ENCODE measurements at regions of chr9 and their contacts with region 1.

Region 1: DNA sequence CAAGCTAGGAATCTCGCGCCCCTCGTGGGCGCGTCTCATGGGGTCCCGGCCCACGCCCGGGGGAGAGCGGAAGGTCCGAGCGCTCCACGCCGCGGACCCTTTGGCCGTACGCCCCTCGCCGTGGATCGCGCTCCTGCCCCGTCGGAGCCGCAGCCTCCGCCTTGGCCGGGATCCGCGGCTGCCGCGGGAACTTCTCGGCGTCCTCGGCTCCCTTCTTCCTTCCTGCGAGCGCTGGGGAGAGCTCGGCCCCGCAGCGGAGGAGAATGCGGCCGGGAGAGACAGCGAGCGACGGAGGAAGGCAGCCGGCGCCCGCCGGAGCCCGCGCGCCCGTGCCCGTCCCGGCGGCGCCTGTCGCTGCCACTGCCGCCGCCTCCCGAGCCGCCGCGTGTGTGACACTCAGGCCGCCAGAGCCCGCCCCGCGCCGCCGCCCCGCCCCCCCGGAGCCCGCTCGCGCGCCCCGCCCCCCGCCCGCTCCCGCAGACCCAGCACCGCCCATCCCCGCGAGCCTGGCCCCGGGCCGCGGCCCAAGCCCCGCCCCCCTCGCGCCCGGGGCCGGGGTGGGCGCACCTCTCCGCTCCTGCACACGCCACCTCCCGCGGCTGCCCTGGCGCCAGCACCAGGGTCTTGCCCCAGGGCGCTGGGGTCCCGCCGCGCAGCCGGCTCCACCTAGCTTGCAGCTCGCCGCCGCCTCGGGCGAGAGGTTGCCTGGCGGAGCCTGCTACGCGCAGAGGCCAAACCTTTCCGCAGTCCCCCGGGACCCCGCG is at the start of gene SHB:
- DNase-seq: peak; percentile 53
- H3K4me3 Mint-ChIP-seq: peak within 1 kb of the TSS; percentile 87
- H3K27ac Mint-ChIP-seq: no peak within 1 kb of the TSS
- H3K4me1 Mint-ChIP-seq: peaks cover 26% of the 10 kb centered on the region
- H3K27me3 Mint-ChIP-seq: no peaks in the 10 kb centered on the region
- CTCF ChIP-seq: no peak
- total RNA-seq, gene SHB: 22.3 and 29.6 TPM in 2 replicates

Region 2: GRCh38 chr9:37390759-37391158 is 678.3 kb before region 1 on chr9:
- CTCF ChIA-PET with region 1: no interaction called
- POLR2A ChIA-PET with region 1: no interaction called
- intact Hi-C with region 1: no loop called
- DNase-seq: peak; percentile 54
- H3K4me3 Mint-ChIP-seq: no peak overlapping the region
- H3K27ac Mint-ChIP-seq: no peak overlapping the region
- H3K4me1 Mint-ChIP-seq: no peaks in the 10 kb centered on the region
- H3K27me3 Mint-ChIP-seq: peaks cover 11% of the 10 kb centered on the region
- CTCF ChIP-seq: peak; percentile 23

Region 3: GRCh38 chr9:37920471-37921167 is 148.4 kb before region 1 on chr9:
- CTCF ChIA-PET with region 1: interaction called, 59 read pairs
- POLR2A ChIA-PET with region 1: interaction called, 8 read pairs
- intact Hi-C with region 1: loop called (anchors 1 kb)
- DNase-seq: no peak
- H3K4me3 Mint-ChIP-seq: no peak overlapping the region
- H3K27ac Mint-ChIP-seq: peak overlapping the region; percentile 85
- H3K4me1 Mint-ChIP-seq: peaks cover 15% of the 10 kb centered on the region
- H3K27me3 Mint-ChIP-seq: no peaks in the 10 kb centered on the region
- CTCF ChIP-seq: no peak

Region 4: GRCh38 chr9:37994639-37995347 is 74.3 kb before region 1 on chr9:
- CTCF ChIA-PET with region 1: interaction called, 8 read pairs
- POLR2A ChIA-PET with region 1: interaction called, 5 read pairs
- intact Hi-C with region 1: loop called (anchors 2 kb)
- DNase-seq: peak; percentile 72
- H3K4me3 Mint-ChIP-seq: peak overlapping the region; percentile 59
- H3K27ac Mint-ChIP-seq: peak overlapping the region; percentile 55
- H3K4me1 Mint-ChIP-seq: peaks cover 37% of the 10 kb centered on the region
- H3K27me3 Mint-ChIP-seq: no peaks in the 10 kb centered on the region
- CTCF ChIP-seq: no peak

Region 5: DNA sequence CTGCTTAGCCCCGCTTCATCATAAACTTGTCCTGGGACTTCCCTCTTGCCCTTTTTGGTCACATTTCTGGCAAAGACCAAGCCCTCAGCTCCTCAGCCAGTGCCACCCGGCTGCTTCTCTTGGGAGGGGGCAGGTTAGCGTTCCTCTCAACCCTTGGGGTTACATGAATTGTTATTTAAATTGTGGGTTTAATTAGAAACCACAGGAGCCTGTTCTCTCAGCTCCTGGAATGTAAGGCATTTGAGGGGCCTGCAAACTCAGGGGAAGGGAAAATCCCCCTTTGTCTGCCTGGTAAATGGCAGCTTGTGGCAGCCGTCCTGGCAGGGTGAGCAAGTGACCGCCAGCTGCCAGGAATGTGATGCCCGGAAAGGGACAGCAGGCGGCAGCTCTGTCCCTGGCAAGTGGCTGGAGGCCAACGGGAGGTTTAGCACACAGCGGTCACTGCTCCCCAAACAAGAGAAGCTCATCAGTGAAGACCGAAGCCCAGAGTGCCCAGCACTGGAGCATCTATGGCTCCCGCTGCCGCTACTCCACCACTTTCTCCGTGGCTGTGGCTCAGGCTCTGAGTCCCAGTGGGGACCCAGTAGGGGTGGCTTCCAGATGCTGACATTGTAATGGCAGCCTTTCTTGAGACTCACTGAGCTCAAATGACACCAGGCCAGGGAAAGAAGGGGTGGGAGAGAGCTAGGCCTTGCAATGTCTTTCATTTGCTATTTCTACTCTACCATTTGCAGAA is 51.7 kb before region 1 on chr9:
- CTCF ChIA-PET with region 1: interaction called, 4 read pairs
- POLR2A ChIA-PET with region 1: interaction called, 11 read pairs
- intact Hi-C with region 1: loop called (anchors 2 kb)
- DNase-seq: peak; percentile 54
- H3K4me3 Mint-ChIP-seq: no peak overlapping the region
- H3K27ac Mint-ChIP-seq: peak overlapping the region; percentile 90
- H3K4me1 Mint-ChIP-seq: peaks cover 47% of the 10 kb centered on the region
- H3K27me3 Mint-ChIP-seq: no peaks in the 10 kb centered on the region
- CTCF ChIP-seq: no peak

Region 6: GRCh38 chr9:38047301-38048251 is 21.5 kb before region 1 on chr9:
- CTCF ChIA-PET with region 1: interaction called, 9 read pairs
- POLR2A ChIA-PET with region 1: interaction called, 26 read pairs
- intact Hi-C with region 1: no loop called
- DNase-seq: peak; percentile 90
- H3K4me3 Mint-ChIP-seq: peak overlapping the region; percentile 36
- H3K27ac Mint-ChIP-seq: peak overlapping the region; percentile 81
- H3K4me1 Mint-ChIP-seq: peaks cover 42% of the 10 kb centered on the region
- H3K27me3 Mint-ChIP-seq: no peaks in the 10 kb centered on the region
- CTCF ChIP-seq: no peak

Region 7: GRCh38 chr9:38088006-38088925 is 19.2 kb after region 1 on chr9:
- CTCF ChIA-PET with region 1: interaction called, 29 read pairs
- POLR2A ChIA-PET with region 1: interaction called, 3 read pairs
- intact Hi-C with region 1: no loop called
- DNase-seq: peak; percentile 66
- H3K4me3 Mint-ChIP-seq: no peak overlapping the region
- H3K27ac Mint-ChIP-seq: no peak overlapping the region
- H3K4me1 Mint-ChIP-seq: no peaks in the 10 kb centered on the region
- H3K27me3 Mint-ChIP-seq: no peaks in the 10 kb centered on the region
- CTCF ChIP-seq: peak; percentile 97

Region 8: DNA sequence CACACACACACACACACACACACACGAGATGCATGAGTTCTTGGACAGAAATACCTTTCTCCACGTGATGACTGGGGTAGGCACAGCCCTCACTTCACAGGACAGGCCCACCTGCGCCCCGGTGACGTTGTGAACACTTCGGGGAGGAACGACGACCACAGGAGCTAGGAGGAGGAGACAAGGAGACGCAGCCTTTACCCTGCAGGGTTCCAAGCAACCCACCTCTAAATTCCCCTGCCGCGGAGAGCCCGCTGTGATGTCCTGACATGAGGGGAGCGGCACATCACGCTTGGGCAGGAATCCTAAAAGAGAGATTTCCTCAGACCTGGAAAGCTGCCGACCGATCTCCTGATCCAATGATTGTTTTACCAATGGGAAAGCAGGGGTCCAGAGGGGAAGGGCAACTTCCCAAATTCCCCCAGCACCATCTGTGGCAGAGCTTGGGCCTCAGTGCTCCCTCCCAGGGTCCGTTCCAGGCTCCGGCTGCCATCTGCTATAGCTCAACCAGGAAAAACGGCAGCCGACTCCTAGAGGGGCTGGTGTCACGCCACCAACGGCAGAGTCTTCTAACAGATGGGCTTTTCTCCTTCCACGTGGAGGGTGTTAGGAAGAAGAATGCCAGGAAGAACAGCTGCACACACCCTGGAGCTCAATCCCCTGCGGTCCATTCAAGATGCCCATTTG is 345.1 kb after region 1 on chr9:
- CTCF ChIA-PET with region 1: no interaction called
- POLR2A ChIA-PET with region 1: no interaction called
- intact Hi-C with region 1: no loop called
- DNase-seq: no peak
- H3K4me3 Mint-ChIP-seq: no peak overlapping the region
- H3K27ac Mint-ChIP-seq: no peak overlapping the region
- H3K4me1 Mint-ChIP-seq: no peaks in the 10 kb centered on the region
- H3K27me3 Mint-ChIP-seq: peaks cover 40% of the 10 kb centered on the region
- CTCF ChIP-seq: no peak